Motor neuron (in vitro differentiated cells): ENCODE measurements at regions of chr12 and their contacts with region 1.

Region 1: GRCh38 chr12:71392521-71393145 is 47.0 kb upstream of the LGR5 start:
- ATAC-seq: peak; percentile 63 to 93 (median 82)
- H3K4me3 ChIP-seq: no peak overlapping the region
- H3K27ac ChIP-seq: no peak overlapping the region
- H3K4me1 ChIP-seq: no peaks in the 10 kb centered on the region

Region 2: DNA sequence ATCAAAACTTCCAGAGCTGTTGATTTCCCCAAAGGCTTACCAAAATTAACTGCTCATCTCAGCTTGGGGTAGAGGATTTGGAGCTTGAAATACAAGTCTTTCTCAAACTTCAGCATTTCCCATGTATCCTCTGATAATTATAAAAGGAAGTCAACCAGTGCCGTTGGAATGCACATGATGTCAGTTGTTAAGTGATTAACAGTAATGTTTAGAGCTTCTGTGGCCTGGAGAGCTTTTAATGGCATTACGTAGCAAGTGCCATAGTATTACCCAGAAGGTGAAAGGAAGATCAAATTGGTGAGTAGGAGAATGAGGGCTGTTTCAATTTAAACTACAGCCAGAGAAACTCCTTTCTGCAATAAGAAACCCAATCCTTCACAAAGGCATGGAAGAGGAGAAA is 409.6 kb before region 1 on chr12:
- in situ Hi-C with region 1: no loop called
- ATAC-seq: peak in 1 of 8 experiments; percentile 11
- H3K4me3 ChIP-seq: no peak overlapping the region
- H3K27ac ChIP-seq: no peak overlapping the region
- H3K4me1 ChIP-seq: no peaks in the 10 kb centered on the region

Region 3: GRCh38 chr12:71216725-71217579 is 175.7 kb before region 1 on chr12:
- in situ Hi-C with region 1: loop called in 1 of 9 experiments (anchors 25 kb)
- ATAC-seq: peak in 3 of 8 experiments; percentile 47 to 70 (median 49)
- H3K4me3 ChIP-seq: no peak overlapping the region
- H3K27ac ChIP-seq: no peak overlapping the region
- H3K4me1 ChIP-seq: no peaks in the 10 kb centered on the region